Cardiac septum (tissue), 1 donor: ENCODE measurements at regions of chr5 and their contacts with region 1.

Region 1: GRCh38 chr5:172748341-172748843 is 22.6 kb downstream of the DUSP1 start:
- DNase-seq: peak; percentile 93

Region 2: GRCh38 chr5:172721301-172722130 is 26.9 kb before region 1 on chr5:
- intact Hi-C with region 1: loop called (anchors 1 kb)
- DNase-seq: no peak